ENCODE measurements at regions of chr6 and their contacts with region 1.

Region 1: DNA sequence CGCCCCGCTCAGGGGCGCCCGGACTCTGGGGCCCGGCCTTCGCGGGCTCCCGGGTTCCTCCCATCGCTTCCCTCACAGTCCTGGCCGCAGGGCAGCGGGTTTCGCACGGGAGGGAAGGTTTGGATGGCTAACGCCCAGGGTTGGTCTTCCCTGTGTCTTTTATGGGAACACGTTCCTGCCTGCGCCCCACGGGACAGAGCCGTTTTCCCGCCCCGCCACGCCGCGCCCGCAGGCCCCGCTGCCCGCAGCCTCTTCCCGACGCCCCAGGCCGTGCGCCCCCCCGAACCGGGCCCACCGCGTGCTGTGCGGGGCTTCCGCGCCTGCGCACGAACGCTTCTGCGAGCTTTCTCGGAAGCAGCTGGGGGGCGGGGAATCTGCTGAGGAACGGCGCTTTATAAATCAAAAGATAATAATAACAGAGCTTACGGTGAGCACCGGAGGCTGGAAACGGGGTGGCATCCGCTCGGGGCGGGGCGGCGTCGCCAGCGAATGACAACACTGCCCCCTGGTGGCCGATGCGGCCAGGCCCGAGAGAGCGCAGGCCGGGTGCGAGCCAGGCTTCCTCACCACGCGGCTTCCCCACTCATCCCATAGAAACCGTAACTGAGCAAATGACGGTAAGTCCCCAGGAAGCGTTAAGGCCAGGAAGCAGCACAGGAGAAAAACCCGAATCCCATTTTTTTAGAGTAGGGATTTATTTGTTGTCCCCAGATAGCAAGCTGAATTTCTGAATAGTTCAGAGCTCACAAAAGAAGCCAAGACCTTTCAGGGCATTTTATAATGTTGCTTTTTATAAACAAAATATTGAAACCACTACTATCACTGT is 116.4 kb downstream of the MYLK4 start:
- DNase-seq: peak; percentile 86
- H3K4me3 ChIP-seq: peak overlapping the region; percentile 22 to 53 (median 40)
- H3K27ac ChIP-seq: peak overlapping the region; percentile 55
- H3K4me1 ChIP-seq: peaks cover 30% of the 10 kb centered on the region
- H3K27me3 ChIP-seq: no peaks in the 10 kb centered on the region
- CTCF ChIP-seq: peak; percentile 80 to 99

Region 2: DNA sequence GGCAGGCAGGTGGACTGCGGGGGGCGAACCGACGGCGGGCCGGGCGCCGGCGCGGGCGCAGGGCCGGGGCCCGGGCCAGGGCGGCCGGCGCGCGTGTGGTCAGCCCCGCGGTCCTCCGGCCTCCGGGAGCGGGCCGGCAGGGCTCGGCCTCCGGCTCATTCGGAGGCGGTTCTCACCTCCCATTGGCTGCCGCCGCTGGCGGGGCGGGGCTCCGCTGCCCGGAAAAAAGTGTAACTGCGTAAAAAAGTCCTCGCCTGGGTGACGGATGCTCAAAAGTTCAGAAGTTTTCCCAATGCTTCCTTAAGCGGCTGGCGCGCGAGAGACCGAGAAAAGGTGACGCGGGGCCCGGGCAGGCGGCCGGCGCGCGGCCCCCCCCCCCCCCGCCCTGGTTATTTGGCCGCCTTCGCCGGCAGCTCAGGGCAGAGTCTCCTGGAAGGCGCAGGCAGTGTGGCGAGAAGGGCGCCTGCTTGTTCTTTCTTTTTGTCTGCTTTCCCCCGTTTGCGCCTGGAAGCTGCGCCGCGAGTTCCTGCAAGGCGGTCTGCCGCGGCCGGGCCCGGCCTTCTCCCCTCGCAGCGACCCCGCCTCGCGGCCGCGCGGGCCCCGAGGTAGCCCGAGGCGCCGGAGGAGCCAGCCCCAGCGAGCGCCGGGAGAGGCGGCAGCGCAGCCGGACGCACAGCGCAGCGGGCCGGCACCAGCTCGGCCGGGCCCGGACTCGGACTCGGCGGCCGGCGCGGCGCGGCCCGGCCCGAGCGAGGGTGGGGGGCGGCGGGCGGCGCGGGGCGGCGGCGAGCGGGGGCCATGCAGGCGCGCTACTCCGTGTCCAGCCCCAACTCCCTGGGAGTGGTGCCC is 1024.5 kb before region 1 on chr6 and contains the start of gene FOXC1:
- CTCF ChIA-PET with region 1: interaction called, 4 read pairs
- dilution Hi-C with region 1: no loop called
- in situ Hi-C with region 1: no loop called
- intact Hi-C with region 1: loop called (anchors 2 kb)
- DNase-seq: peak; percentile 93
- H3K4me3 ChIP-seq: peak within 1 kb of the TSS; percentile 66 to 87 (median 77)
- H3K27ac ChIP-seq: peak within 1 kb of the TSS; percentile 75
- H3K4me1 ChIP-seq: peaks cover 10% of the 10 kb centered on the region
- H3K27me3 ChIP-seq: no peaks in the 10 kb centered on the region
- CTCF ChIP-seq: no peak
- total RNA-seq, gene FOXC1: 12.1 to 15.8 TPM

Region 3: GRCh38 chr6:2103644-2104523 is 530.5 kb before region 1 on chr6:
- CTCF ChIA-PET with region 1: no interaction called
- dilution Hi-C with region 1: no loop called
- in situ Hi-C with region 1: loop called in 1 of 2 experiments (anchors 25 kb)
- intact Hi-C with region 1: loop called (anchors 1 kb)
- DNase-seq: peak; percentile 54
- H3K4me3 ChIP-seq: peak overlapping the region; percentile 12 to 38 (median 32)
- H3K27ac ChIP-seq: peak overlapping the region; percentile 32
- H3K4me1 ChIP-seq: peaks cover 7% of the 10 kb centered on the region
- H3K27me3 ChIP-seq: no peaks in the 10 kb centered on the region
- CTCF ChIP-seq: peak; percentile 47 to 68

Region 4: GRCh38 chr6:2245094-2245876 is 389.1 kb before region 1 on chr6 and contains the start of gene GMDS:
- CTCF ChIA-PET with region 1: no interaction called
- dilution Hi-C with region 1: no loop called
- in situ Hi-C with region 1: no loop called
- intact Hi-C with region 1: loop called (anchors 1 kb)
- DNase-seq: peak; percentile 87
- H3K4me3 ChIP-seq: peak within 1 kb of the TSS; percentile 55 to 90 (median 79)
- H3K27ac ChIP-seq: peak within 1 kb of the TSS; percentile 63
- H3K4me1 ChIP-seq: peaks cover 12% of the 10 kb centered on the region
- H3K27me3 ChIP-seq: no peaks in the 10 kb centered on the region
- CTCF ChIP-seq: no peak
- total RNA-seq, gene GMDS: 11.5 to 34.1 TPM

Region 5: DNA sequence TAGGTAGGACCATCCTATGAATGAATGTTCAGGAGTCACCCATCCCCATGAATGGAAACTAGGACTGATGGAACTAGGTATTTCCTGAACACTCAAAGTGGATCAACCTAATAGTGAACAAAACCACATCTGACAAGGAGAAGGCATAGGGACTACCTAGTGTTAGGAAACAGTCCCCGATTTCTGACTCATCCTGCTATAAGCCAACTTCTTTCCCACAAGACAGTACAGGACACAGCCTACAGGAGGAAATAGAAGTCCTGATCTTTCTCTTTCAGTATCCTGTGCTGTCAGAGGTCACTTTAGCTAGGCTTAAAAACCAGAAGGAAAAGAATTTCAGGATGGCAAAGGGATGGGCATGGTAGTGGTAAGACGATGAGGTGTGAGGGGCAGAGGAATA is 369.4 kb before region 1 on chr6:
- CTCF ChIA-PET with region 1: no interaction called
- dilution Hi-C with region 1: no loop called
- in situ Hi-C with region 1: no loop called
- intact Hi-C with region 1: no loop called
- DNase-seq: peak; percentile 87
- H3K4me3 ChIP-seq: no peak overlapping the region
- H3K27ac ChIP-seq: no peak overlapping the region
- H3K4me1 ChIP-seq: peaks cover 10% of the 10 kb centered on the region
- H3K27me3 ChIP-seq: no peaks in the 10 kb centered on the region
- CTCF ChIP-seq: peak in 1 of 2 donors; percentile 28

Region 6: GRCh38 chr6:2448820-2449571 is 185.4 kb before region 1 on chr6:
- CTCF ChIA-PET with region 1: no interaction called
- dilution Hi-C with region 1: no loop called
- in situ Hi-C with region 1: loop called (anchors 5 to 10 kb)
- intact Hi-C with region 1: loop called (anchors 1 kb)
- DNase-seq: peak; percentile 64
- H3K4me3 ChIP-seq: peak overlapping the region in 2 of 3 experiments; percentile 2 to 37
- H3K27ac ChIP-seq: no peak overlapping the region
- H3K4me1 ChIP-seq: peaks cover 6% of the 10 kb centered on the region
- H3K27me3 ChIP-seq: no peaks in the 10 kb centered on the region
- CTCF ChIP-seq: peak; percentile 83

Region 7: DNA sequence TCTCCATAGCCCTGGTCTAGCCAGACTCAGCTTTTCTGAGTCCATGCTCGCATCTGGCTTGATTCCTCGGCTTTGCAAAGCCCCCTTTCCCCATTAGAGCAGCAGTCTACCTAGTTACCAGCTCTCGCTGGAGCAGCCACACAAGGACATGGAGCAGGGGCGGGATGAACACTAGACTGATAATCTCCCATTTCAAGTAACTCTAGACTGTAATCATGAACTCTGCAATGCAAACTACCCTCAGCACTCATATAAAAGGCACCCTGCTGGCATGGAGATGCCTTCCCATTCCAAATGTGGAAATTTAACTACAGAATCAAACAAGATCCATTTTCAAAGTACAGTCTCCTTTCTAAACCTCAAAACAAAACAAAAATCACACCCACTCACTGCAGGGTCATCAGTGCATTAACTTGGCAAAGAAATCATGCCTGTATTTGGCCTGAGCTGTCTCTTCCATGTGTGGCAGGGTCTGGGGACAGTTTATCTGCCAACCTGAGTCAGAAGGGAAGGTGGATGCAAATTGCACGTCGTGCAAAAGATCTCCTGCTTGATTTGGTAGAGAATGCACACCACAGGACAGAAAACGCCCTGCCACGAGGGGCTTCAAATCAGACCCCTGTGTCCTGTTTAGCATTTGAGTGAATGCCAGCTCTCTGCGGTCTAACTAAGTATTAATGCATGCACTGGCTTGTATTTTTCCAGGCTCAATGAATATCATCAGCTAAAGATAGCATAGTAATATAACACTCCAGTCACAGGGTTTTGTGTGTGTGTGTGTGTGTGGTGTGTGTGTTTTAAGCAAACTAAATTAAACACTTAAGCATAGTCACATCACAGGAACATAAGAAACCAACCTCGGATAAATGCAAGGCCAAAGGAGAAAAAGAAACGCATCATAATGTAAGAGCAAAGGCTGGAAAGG is 31.1 kb after region 1 on chr6:
- CTCF ChIA-PET with region 1: no interaction called
- dilution Hi-C with region 1: no loop called
- in situ Hi-C with region 1: no loop called
- intact Hi-C with region 1: no loop called
- DNase-seq: peak; percentile 57
- H3K4me3 ChIP-seq: no peak overlapping the region
- H3K27ac ChIP-seq: no peak overlapping the region
- H3K4me1 ChIP-seq: peaks cover 18% of the 10 kb centered on the region
- H3K27me3 ChIP-seq: no peaks in the 10 kb centered on the region
- CTCF ChIP-seq: no peak

Region 8: GRCh38 chr6:2695454-2696095 is 61.2 kb after region 1 on chr6:
- CTCF ChIA-PET with region 1: no interaction called
- dilution Hi-C with region 1: no loop called
- in situ Hi-C with region 1: no loop called
- intact Hi-C with region 1: loop called (anchors 1 kb)
- DNase-seq: peak; percentile 38
- H3K4me3 ChIP-seq: no peak overlapping the region
- H3K27ac ChIP-seq: no peak overlapping the region
- H3K4me1 ChIP-seq: no peaks in the 10 kb centered on the region
- H3K27me3 ChIP-seq: no peaks in the 10 kb centered on the region
- CTCF ChIP-seq: peak; percentile 17 to 50

Region 9: DNA sequence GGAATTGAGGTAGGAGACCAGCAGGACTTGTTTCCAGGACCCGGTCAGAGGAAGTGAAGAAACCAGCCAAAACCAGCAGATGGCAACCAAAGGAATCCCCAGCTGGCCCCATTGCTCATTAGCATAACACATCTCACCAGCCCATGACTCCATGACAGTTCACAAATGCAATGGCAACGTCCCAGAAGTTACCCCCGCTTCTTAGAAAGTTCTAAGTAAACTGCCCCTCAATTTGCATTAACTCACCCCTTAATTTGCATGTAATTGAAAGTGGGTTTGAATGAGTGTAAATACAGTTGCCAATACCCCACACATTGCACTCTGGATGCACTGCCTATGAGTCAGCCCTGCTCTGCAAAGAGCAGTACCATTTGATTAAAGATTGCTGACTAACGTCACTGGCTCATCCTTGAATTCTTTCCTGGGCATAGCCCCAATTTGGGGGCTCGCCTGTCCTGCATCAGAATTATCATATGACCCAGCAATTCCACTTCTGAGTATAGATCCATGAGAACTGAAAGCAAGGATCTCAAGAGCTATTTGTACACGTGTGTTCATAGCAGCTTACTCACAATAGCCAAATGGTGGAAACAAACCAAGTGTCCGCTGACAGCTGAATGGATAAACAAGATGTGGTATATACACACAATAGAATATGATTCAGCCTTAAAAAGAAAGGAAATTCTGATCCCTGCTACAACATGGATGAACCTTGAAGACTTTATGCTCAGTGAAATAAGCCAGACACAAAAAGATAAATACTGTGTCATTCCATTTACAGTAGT is 80.0 kb after region 1 on chr6:
- CTCF ChIA-PET with region 1: no interaction called
- dilution Hi-C with region 1: no loop called
- in situ Hi-C with region 1: no loop called
- intact Hi-C with region 1: no loop called
- DNase-seq: peak; percentile 58
- H3K4me3 ChIP-seq: no peak overlapping the region
- H3K27ac ChIP-seq: no peak overlapping the region
- H3K4me1 ChIP-seq: peaks cover 3% of the 10 kb centered on the region
- H3K27me3 ChIP-seq: no peaks in the 10 kb centered on the region
- CTCF ChIP-seq: no peak

Region 10: GRCh38 chr6:2760882-2761842 is 126.8 kb after region 1 on chr6:
- CTCF ChIA-PET with region 1: no interaction called
- dilution Hi-C with region 1: no loop called
- in situ Hi-C with region 1: no loop called
- intact Hi-C with region 1: no loop called
- DNase-seq: peak; percentile 42
- H3K4me3 ChIP-seq: no peak overlapping the region
- H3K27ac ChIP-seq: no peak overlapping the region
- H3K4me1 ChIP-seq: peaks cover 8% of the 10 kb centered on the region
- H3K27me3 ChIP-seq: no peaks in the 10 kb centered on the region
- CTCF ChIP-seq: peak; percentile 35 to 46